ENCODE measurements at regions of chr12 and their contacts with region 1.

Region 1: GRCh38 chr12:40911676-40912075 is 219.4 kb downstream of the CNTN1 start:
- DNase-seq: no peak
- ATAC-seq: no peak
- H3K4me3 ChIP-seq: no peak overlapping the region
- H3K27ac ChIP-seq: no peak overlapping the region
- H3K4me1 ChIP-seq: no peaks in the 10 kb centered on the region
- H3K27me3 ChIP-seq: no peaks in the 10 kb centered on the region
- CTCF ChIP-seq: no peak

Region 2: GRCh38 chr12:40224439-40225291 is 687.0 kb before region 1 on chr12 and contains the start of gene LRRK2:
- intact Hi-C with region 1: no loop called
- DNase-seq: peak; percentile 86
- ATAC-seq: peak; percentile 85 to 97 (median 92)
- H3K4me3 ChIP-seq: peak within 1 kb of the TSS; percentile 52 to 78 (median 74)
- H3K27ac ChIP-seq: peak within 1 kb of the TSS; percentile 76 to 98 (median 95)
- H3K4me1 ChIP-seq: peaks cover 0 to 51% (median 8%) of the 10 kb centered on the region in 9 donors
- H3K27me3 ChIP-seq: no peaks in the 10 kb centered on the region
- CTCF ChIP-seq: peak in 5 of 9 donors; percentile 13 to 28 (median 17)
- total RNA-seq, gene LRRK2: 4.4 to 9.1 (median 7.0) TPM

Region 3: GRCh38 chr12:40342010-40342409 is 569.7 kb before region 1 on chr12:
- intact Hi-C with region 1: loop called in 1 of 10 experiments (anchors 10 kb)
- DNase-seq: no peak
- ATAC-seq: peak in 1 of 8 donors; percentile 53
- H3K4me3 ChIP-seq: no peak overlapping the region
- H3K27ac ChIP-seq: no peak overlapping the region
- H3K4me1 ChIP-seq: peaks cover 0 to 18% (median 4%) of the 10 kb centered on the region in 9 donors
- H3K27me3 ChIP-seq: no peaks in the 10 kb centered on the region
- CTCF ChIP-seq: no peak

Region 4: DNA sequence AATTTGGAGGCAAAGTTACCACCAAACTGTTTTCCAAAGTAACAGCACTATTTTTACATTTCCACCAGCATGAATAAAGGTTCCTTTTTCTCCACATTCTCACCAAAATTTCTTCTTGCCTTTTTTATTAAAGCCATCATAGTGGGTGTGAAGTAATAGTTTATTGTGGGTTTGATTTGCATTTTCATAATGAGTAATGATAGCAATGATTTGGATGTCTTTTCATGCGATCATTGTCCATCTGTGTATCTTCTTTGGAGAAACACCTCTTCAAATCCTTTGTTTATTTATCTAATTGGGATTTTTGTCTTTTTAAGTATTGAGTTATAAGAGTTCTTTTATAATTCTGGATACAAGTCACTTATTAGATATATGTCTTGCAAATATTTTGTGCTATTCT is 46.8 kb before region 1 on chr12:
- intact Hi-C with region 1: no loop called
- DNase-seq: no peak
- ATAC-seq: no peak
- H3K4me3 ChIP-seq: no peak overlapping the region
- H3K27ac ChIP-seq: no peak overlapping the region
- H3K4me1 ChIP-seq: no peaks in the 10 kb centered on the region
- H3K27me3 ChIP-seq: no peaks in the 10 kb centered on the region
- CTCF ChIP-seq: no peak

Region 5: GRCh38 chr12:40959041-40959440 is 47.4 kb after region 1 on chr12:
- intact Hi-C with region 1: no loop called
- DNase-seq: no peak
- ATAC-seq: no peak
- H3K4me3 ChIP-seq: no peak overlapping the region
- H3K27ac ChIP-seq: no peak overlapping the region
- H3K4me1 ChIP-seq: no peaks in the 10 kb centered on the region
- H3K27me3 ChIP-seq: no peaks in the 10 kb centered on the region
- CTCF ChIP-seq: no peak

Region 6: DNA sequence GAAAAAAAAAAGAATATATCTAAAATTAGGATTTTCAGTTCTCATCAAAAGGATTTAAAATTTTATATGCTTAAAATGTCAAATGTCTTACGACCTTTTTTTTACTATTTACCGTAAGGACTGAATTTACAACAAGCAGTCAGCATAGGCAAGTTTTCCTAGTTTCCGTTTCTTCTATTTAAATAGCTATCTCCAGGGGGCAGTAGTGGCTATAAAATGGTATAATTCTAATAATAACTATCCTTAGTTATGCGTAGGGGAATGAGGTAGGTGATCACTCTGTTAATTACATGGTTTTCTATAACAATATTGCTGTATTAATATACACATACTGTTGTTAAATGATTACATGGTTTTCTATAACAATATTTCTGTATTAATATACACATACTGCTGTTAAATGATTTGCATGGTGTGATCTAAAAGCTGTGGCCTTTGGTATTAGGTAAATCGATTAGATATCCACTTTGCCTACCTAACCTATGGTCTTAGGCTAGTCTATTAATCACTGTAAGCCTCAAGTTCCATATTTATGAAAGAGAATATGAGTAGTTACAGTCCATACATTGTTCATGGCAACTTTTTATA is 58.7 kb after region 1 on chr12:
- intact Hi-C with region 1: no loop called
- DNase-seq: no peak
- ATAC-seq: no peak
- H3K4me3 ChIP-seq: no peak overlapping the region
- H3K27ac ChIP-seq: no peak overlapping the region
- H3K4me1 ChIP-seq: no peaks in the 10 kb centered on the region
- H3K27me3 ChIP-seq: no peaks in the 10 kb centered on the region
- CTCF ChIP-seq: peak in 2 of 9 donors; percentile 10 to 19